Naive thymus-derived CD8-positive, alpha-beta T cell (primary cell): ENCODE measurements at regions of chrX and their contacts with region 1.

Region 1: DNA sequence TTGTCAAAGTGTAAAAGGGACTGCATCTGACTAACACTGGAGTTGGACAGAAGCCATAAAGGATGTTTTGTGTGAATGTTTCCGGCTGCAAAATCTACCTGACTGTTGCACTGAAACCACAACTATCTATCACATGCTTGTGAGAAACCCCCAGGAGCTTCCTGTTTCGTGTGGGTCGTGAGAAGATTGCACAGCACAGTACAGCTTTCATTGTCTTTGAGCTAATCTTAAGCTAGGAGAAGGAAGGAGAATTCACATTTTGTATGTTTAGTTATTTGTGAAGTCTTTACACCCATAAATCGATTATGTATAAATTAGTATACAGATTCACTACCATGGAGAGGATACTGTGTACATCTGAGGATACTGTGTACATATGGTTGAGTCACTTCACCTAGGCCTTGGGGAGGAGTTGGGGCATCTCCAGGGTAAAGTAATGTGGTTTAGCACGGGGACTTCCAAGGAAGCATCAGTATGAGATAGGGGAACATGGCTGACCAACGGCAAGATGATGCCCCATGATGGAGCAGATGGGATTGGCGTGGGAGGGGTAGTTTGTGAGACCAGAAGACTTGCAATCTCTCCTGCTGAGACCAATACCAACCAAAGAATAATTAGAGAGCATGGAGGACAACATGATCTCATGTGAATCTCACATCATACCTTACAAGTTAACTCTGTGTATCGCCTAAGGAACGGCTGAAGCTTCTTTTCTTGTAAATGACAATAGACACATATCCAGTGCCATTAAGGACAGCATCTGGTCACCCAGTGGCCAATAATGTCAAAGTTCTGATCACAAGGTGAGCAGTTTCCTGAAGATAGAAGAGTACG is 43.1 kb upstream of the FAM9C start:
- DNase-seq: peak in 9 of 10 donors; percentile 42 to 93 (median 78)
- ATAC-seq: peak; percentile 69 to 76
- H3K4me3 Mint-ChIP-seq: peak overlapping the region; percentile 57 to 89 (median 84)
- H3K27ac Mint-ChIP-seq: peak overlapping the region; percentile 93 to 100 (median 98)
- H3K4me1 Mint-ChIP-seq: peaks cover 16 to 93% (median 81%) of the 10 kb centered on the region in 4 donors
- H3K27me3 Mint-ChIP-seq: no peaks in the 10 kb centered on the region

Region 2: GRCh38 chrX:12946838-12947544 is 140.5 kb before region 1 on chrX:
- POLR2A ChIA-PET with region 1: interaction called, 238 read pairs
- DNase-seq: peak; percentile 38 to 95 (median 73)
- ATAC-seq: peak in 1 of 2 donors; percentile 11
- H3K4me3 Mint-ChIP-seq: peak overlapping the region; percentile 19 to 82 (median 68)
- H3K27ac Mint-ChIP-seq: peak overlapping the region; percentile 37 to 99 (median 96)
- H3K4me1 Mint-ChIP-seq: peaks cover 10 to 57% (median 50%) of the 10 kb centered on the region in 4 donors
- H3K27me3 Mint-ChIP-seq: no peaks in the 10 kb centered on the region

Region 3: DNA sequence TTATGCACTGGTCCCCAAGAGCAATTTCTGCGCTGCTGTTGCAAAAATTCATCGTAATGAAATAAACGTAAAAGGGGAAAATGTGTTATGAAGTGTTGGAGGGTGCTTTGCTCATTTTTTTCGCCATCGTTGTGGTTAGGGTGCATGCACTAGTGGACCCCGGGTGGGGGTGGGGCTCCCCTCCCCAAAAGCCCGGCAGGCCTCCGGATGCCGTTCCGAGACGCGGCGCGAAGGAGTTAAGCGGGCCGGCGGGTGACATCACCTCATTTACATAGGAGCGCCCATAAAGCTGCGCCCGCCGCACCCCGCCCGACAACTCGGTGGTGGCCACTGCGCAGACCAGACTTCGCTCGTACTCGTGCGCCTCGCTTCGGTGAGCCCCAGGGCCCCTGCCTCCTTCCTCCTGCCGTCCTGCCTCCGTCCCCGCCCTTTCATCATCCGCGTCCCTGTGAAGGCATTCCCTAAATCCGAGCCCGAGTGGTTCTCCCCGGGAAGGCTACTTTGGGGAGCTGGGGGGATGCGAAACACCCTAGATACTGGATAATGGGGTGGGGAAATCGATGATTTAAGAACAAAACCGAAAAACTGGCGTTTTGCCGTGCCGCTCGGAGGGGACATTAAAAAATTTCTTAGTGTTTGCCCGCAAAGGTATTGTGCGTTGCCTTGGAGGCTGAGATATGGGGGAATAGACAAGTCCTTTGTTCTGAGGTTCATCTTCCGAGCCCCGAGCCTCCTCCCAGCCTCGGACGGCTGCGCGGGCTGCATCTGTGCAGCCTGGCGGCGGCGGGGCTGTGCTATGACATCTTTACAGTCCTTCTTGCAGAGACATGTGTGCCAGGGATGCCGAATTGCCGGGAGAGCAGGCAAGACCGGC is 112.5 kb before region 1 on chrX and contains the start of gene TMSB4X:
- POLR2A ChIA-PET with region 1: interaction called, 1,055 read pairs
- DNase-seq: peak; percentile 64 to 91 (median 80)
- ATAC-seq: peak; percentile 45 to 48
- H3K4me3 Mint-ChIP-seq: peak within 1 kb of the TSS; percentile 95 to 99 (median 97)
- H3K27ac Mint-ChIP-seq: peak within 1 kb of the TSS; percentile 93 to 98 (median 97)
- H3K4me1 Mint-ChIP-seq: peaks cover 10 to 51% (median 29%) of the 10 kb centered on the region in 4 donors
- H3K27me3 Mint-ChIP-seq: no peaks in the 10 kb centered on the region
- polyA plus RNA-seq, gene TMSB4X: 23,903 to 30,039 (median 28,786) TPM

Region 4: GRCh38 chrX:13005661-13006473 is 81.7 kb before region 1 on chrX:
- POLR2A ChIA-PET with region 1: interaction called, 218 read pairs
- DNase-seq: peak in 2 of 10 donors; percentile 6 to 28
- ATAC-seq: peak; percentile 70
- H3K4me3 Mint-ChIP-seq: peak overlapping the region; percentile 52 to 95 (median 84)
- H3K27ac Mint-ChIP-seq: peak overlapping the region; percentile 90 to 100 (median 96)
- H3K4me1 Mint-ChIP-seq: peaks cover 18 to 77% (median 59%) of the 10 kb centered on the region in 4 donors
- H3K27me3 Mint-ChIP-seq: no peaks in the 10 kb centered on the region

Region 5: DNA sequence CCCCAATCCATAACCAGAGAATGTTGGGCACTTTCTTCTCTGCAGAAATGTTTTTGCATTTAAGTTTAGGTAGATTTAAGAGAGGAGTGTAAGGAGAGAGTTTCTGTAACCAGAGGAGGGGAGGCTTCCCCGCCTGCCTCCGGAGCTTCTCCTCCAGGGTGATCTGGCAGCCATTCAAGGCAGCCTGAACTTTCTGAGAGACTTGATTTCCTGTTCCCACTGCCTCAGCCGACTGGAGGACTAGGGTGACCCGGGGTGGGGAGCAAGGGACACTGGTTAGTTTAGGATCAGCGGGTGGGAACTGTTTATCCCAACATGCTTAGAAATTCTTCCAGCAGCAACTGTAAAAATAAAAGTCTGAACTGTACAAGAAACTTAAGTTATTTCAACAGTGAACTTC is 58.2 kb before region 1 on chrX:
- POLR2A ChIA-PET with region 1: interaction called, 73 read pairs
- DNase-seq: peak in 2 of 10 donors; percentile 6 to 23
- ATAC-seq: peak; percentile 30 to 43
- H3K4me3 Mint-ChIP-seq: peak overlapping the region in 9 of 10 donors; percentile 39 to 80 (median 67)
- H3K27ac Mint-ChIP-seq: peak overlapping the region; percentile 80 to 98 (median 93)
- H3K4me1 Mint-ChIP-seq: peaks cover 27 to 79% (median 65%) of the 10 kb centered on the region in 4 donors
- H3K27me3 Mint-ChIP-seq: no peaks in the 10 kb centered on the region

Region 6: GRCh38 chrX:13131396-13132137 is 44.0 kb after region 1 on chrX:
- POLR2A ChIA-PET with region 1: no interaction called
- DNase-seq: peak in 4 of 10 donors; percentile 1 to 26 (median 13)
- ATAC-seq: peak; percentile 62 to 67
- H3K4me3 Mint-ChIP-seq: peak overlapping the region in 3 of 10 donors; percentile 6 to 45 (median 20)
- H3K27ac Mint-ChIP-seq: peak overlapping the region in 7 of 10 donors; percentile 13 to 79 (median 63)
- H3K4me1 Mint-ChIP-seq: peaks cover 0 to 29% (median 10%) of the 10 kb centered on the region in 4 donors
- H3K27me3 Mint-ChIP-seq: no peaks in the 10 kb centered on the region

Region 7: GRCh38 chrX:13487731-13488523 is 400.4 kb after region 1 on chrX:
- POLR2A ChIA-PET with region 1: interaction called, 14 read pairs
- DNase-seq: peak in 9 of 10 donors; percentile 1 to 67 (median 42)
- ATAC-seq: peak; percentile 75 to 88
- H3K4me3 Mint-ChIP-seq: peak overlapping the region in 4 of 10 donors; percentile 6 to 33 (median 28)
- H3K27ac Mint-ChIP-seq: peak overlapping the region; percentile 34 to 91 (median 78)
- H3K4me1 Mint-ChIP-seq: peaks cover 4 to 49% (median 33%) of the 10 kb centered on the region in 4 donors
- H3K27me3 Mint-ChIP-seq: no peaks in the 10 kb centered on the region